Posterior vena cava (tissue), 2 donors: ENCODE measurements at regions of chrX and their contacts with region 1.

Region 1: DNA sequence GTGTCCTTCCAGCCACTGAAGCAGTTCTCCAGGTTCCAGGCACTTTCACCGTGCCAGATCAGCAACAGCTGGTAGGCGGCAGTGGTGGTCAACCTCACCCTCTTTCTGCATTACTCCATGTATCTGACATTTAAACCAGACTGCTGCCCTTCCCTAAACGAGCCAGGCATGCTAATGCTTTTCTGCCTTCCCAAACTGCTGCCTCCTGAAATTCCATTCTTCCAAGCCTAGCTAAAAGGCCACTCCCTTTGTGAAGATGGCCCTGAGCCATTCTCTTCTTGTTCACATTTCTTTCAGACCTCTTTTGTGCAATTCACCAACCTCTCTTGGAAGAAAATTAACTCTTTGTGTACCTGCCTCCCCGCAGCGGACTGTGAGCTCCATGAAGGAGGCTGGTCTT is 73.7 kb downstream of the CHST7 start:
- DNase-seq: no peak

Region 2: DNA sequence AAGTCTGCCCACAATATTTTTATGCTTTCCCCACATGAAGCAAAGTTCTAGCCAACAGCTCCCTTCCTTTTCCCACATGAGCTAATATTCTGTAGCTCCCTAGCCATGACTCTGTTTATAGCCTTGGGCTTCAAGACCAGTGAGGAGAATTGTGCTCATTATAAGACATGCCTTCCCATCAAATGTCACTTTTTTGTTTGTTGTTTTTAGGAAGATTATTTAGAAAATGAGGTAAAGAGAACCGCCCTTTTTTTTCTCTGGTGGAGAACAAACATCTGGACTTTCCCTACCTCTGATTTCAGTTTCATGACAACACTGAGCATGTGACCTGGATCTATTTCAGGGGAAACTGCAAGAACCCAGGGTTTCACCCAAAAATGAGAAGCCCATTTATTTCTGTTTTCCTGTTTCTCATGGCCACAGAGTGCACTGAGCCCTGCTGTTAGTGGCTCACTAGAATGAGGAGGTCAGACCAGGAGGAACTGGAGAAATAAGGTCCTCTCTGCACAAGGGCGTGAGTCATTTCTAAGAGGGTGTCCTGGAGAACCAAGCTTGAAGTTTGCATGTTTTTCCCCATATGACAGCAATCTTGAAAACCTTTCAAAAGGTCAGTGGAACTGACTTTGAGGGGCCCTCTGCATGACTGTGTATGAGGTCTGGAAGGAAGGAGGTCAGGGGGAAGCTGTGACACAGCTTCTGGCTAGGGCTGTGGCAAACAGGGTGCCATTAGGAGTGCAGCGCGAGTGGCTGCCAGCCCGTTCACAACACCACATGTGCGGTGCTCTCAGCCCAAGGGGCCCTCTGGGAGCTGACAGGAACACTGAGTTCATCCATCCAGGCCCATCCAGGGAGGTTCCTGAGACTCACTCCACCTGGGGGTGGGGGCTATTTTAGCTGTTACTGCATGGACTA is 18.5 kb before region 1 on chrX:
- intact Hi-C with region 1: loop called in 1 of 2 experiments (anchors 1 kb)
- DNase-seq: peak; percentile 80

Region 3: GRCh38 chrX:47690175-47690574 is 1042.9 kb after region 1 on chrX:
- intact Hi-C with region 1: no loop called
- DNase-seq: no peak